ENCODE measurements at regions of chr21 and their contacts with region 1.

Region 1: DNA sequence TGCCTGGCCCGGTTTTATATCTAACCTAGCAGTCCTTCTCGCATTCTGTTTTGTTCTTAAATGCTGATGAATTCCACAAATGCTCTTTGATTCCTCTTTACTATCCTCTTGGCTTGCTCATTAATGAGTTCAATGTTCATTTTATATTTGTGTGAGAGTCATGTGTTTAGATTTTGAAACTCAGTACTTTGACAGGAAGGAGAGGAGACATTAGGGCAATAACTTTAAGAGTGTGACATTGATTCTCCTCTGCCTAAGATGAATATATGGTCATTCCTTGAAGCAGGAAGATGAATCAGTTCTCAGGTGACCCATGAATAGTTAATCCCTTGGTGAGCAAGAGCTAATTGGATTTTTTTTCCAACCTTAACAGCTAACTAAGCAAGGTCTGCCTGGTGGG is 84.1 kb downstream of the MRPS6 start:
- DNase-seq: no peak
- H3K4me3 ChIP-seq: no peak overlapping the region
- H3K27ac ChIP-seq: no peak overlapping the region
- H3K4me1 ChIP-seq: no peaks in the 10 kb centered on the region
- H3K27me3 ChIP-seq: no peaks in the 10 kb centered on the region
- CTCF ChIP-seq: no peak
- POLR2A ChIP-seq: no peak

Region 2: GRCh38 chr21:33419538-33420123 is 737.9 kb before region 1 on chr21:
- intact Hi-C with region 1: loop called (anchors 10 kb)
- DNase-seq: no peak
- H3K4me3 ChIP-seq: no peak overlapping the region
- H3K27ac ChIP-seq: peak overlapping the region; percentile 55 to 87
- H3K4me1 ChIP-seq: no peaks in the 10 kb centered on the region
- H3K27me3 ChIP-seq: no peaks in the 10 kb centered on the region
- CTCF ChIP-seq: no peak
- POLR2A ChIP-seq: no peak

Region 3: DNA sequence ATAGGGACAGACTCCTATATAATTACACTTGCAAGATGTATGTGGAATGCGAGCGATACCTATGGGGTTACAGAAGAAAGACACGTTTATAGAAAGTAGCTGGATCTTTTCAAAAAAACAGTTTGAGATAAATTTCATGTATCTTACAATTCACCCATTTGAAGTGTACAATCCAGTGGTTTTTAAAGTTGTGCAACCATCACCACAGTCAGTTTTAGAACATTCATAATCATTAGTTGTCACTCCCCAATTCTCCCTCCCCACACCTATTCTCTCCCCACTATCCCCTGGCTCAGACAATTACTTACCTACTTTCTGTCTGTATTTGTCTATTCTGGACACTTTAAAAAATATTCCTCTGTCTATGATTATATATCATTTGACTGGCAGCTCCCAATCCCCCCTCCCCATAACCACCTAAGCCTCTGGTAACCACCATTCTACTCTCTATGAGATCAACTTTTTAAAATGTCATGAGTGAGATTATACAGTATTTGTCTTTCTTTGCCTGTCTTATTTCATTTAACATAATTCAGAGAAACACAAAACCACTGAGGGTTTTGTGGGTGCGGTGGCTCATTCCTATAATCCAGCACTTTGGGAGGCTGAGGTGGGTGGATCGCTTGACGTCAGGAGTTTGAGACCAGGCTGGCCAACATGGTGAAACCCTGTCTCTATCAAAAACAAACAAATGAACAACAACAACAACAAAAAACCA is 45.0 kb before region 1 on chr21:
- intact Hi-C with region 1: no loop called
- DNase-seq: no peak
- H3K4me3 ChIP-seq: no peak overlapping the region
- H3K27ac ChIP-seq: no peak overlapping the region
- H3K4me1 ChIP-seq: no peaks in the 10 kb centered on the region
- H3K27me3 ChIP-seq: no peaks in the 10 kb centered on the region
- CTCF ChIP-seq: no peak
- POLR2A ChIP-seq: no peak